Aorta (tissue), 5 donors: ENCODE measurements at regions of chr3 and their contacts with region 1.

Region 1: GRCh38 chr3:101381809-101382208 is 61.4 kb upstream of the IMPG2 start:
- DNase-seq: no peak
- ATAC-seq: peak; percentile 72
- H3K4me3 ChIP-seq: no peak overlapping the region
- H3K27ac ChIP-seq: no peak overlapping the region
- H3K4me1 ChIP-seq: peaks cover 3 to 5% of the 10 kb centered on the region in 2 donors
- H3K27me3 ChIP-seq: no peaks in the 10 kb centered on the region

Region 2: GRCh38 chr3:100893590-100893989 is 488.2 kb before region 1 on chr3:
- intact Hi-C with region 1: loop called (anchors 5 kb)
- DNase-seq: peak in 1 of 2 donors; percentile 51
- ATAC-seq: no peak
- H3K4me3 ChIP-seq: no peak overlapping the region
- H3K27ac ChIP-seq: no peak overlapping the region
- H3K4me1 ChIP-seq: no peaks in the 10 kb centered on the region
- H3K27me3 ChIP-seq: no peaks in the 10 kb centered on the region

Region 3: GRCh38 chr3:100899440-100900091 is 482.2 kb before region 1 on chr3:
- intact Hi-C with region 1: loop called (anchors 5 kb)
- DNase-seq: no peak
- ATAC-seq: no peak
- H3K4me3 ChIP-seq: no peak overlapping the region
- H3K27ac ChIP-seq: no peak overlapping the region
- H3K4me1 ChIP-seq: no peaks in the 10 kb centered on the region
- H3K27me3 ChIP-seq: no peaks in the 10 kb centered on the region

Region 4: GRCh38 chr3:101229681-101230080 is 152.1 kb before region 1 on chr3:
- intact Hi-C with region 1: loop called in 1 of 2 experiments (anchors 10 kb)
- DNase-seq: no peak
- ATAC-seq: no peak
- H3K4me3 ChIP-seq: no peak overlapping the region
- H3K27ac ChIP-seq: no peak overlapping the region
- H3K4me1 ChIP-seq: no peaks in the 10 kb centered on the region
- H3K27me3 ChIP-seq: no peaks in the 10 kb centered on the region